ENCODE measurements at regions of chr21 and their contacts with region 1.

Region 1: GRCh38 chr21:43810505-43811261 is 21.3 kb downstream of the RRP1 start:
- DNase-seq: peak; percentile 92
- H3K4me3 Mint-ChIP-seq: no peak overlapping the region
- H3K27ac Mint-ChIP-seq: peak overlapping the region; percentile 47
- H3K4me1 Mint-ChIP-seq: peaks cover 17% of the 10 kb centered on the region
- H3K27me3 Mint-ChIP-seq: no peaks in the 10 kb centered on the region

Region 2: GRCh38 chr21:43975495-43975993 is 164.9 kb after region 1 on chr21:
- CTCF ChIA-PET with region 1: interaction called, 13 read pairs
- POLR2A ChIA-PET with region 1: no interaction called
- DNase-seq: peak; percentile 87
- H3K4me3 Mint-ChIP-seq: no peak overlapping the region
- H3K27ac Mint-ChIP-seq: peak overlapping the region; percentile 52
- H3K4me1 Mint-ChIP-seq: peaks cover 15% of the 10 kb centered on the region
- H3K27me3 Mint-ChIP-seq: no peaks in the 10 kb centered on the region

Measured in activated CD4-positive, alpha-beta T cell treated with anti-CD3 and anti-CD28 coated beads, Interleukin-2, amount 10 ng/mL, durations not matched to agents 7 days and 5 days (primary cell).